Activated naive CD4-positive, alpha-beta T cell treated with anti-CD3 and anti-CD28 coated beads for 36 hours (primary cell): ENCODE measurements at regions of chr6 and their contacts with region 1.

Region 1: GRCh38 chr6:111113336-111114086 is 26.2 kb downstream of the SLC16A10 start:
- DNase-seq: peak; percentile 82
- H3K4me3 Mint-ChIP-seq: peak overlapping the region; percentile 65
- H3K27ac Mint-ChIP-seq: peak overlapping the region; percentile 92
- H3K4me1 Mint-ChIP-seq: peaks cover 34% of the 10 kb centered on the region
- H3K27me3 Mint-ChIP-seq: no peaks in the 10 kb centered on the region

Region 2: DNA sequence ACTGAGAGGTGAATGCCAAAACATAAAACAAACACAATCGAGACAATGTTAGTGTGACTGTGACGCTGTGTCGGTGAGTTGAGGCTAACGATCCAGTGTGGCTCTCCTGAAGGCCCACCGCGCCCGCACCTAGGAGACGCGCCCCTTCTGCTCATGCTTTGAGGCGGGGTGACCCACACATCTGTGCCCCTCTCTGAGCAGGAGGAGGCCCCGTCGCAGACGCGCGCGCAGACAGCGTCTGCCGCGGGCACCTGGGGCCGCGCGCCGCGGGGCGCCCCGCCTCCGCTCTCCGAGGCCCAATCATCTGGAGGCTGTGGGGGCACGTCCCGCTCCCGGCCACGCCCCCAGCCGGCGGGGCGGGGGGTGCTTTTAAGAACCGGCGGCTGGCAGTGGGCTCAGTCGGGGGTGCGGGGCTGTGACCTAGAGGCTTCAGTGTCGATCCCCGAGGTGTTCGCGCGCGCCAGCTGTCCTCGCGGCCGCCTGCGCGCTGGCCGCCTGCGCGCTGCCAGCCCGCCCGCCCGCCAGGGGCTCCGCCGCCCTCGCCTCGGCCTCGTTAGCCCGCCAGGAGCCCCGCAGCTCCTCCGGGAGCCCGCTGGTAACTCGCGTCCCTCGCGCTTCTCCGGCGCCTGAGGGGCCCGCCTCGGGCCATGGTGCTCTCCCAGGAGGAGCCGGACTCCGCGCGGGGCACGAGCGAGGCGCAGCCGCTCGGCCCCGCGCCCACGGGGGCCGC is 26.2 kb before region 1 on chr6 and contains the start of gene SLC16A10:
- CTCF ChIA-PET with region 1: no interaction called
- intact Hi-C with region 1: loop called (anchors 1 kb)
- DNase-seq: peak; percentile 74
- H3K4me3 Mint-ChIP-seq: peak within 1 kb of the TSS; percentile 89
- H3K27ac Mint-ChIP-seq: peak within 1 kb of the TSS; percentile 76
- H3K4me1 Mint-ChIP-seq: peaks cover 36% of the 10 kb centered on the region
- H3K27me3 Mint-ChIP-seq: no peaks in the 10 kb centered on the region
- total RNA-seq, gene SLC16A10: 6.6 to 8.1 TPM

Region 3: GRCh38 chr6:111096246-111096645 is 17.3 kb before region 1 on chr6:
- CTCF ChIA-PET with region 1: no interaction called
- intact Hi-C with region 1: loop called (anchors 2 kb)
- DNase-seq: peak; percentile 77
- H3K4me3 Mint-ChIP-seq: no peak overlapping the region
- H3K27ac Mint-ChIP-seq: peak overlapping the region; percentile 6
- H3K4me1 Mint-ChIP-seq: peaks cover 25% of the 10 kb centered on the region
- H3K27me3 Mint-ChIP-seq: no peaks in the 10 kb centered on the region